Sciatic nerve (tissue), 2 donors: ENCODE measurements at regions of chr4 and their contacts with region 1.

Region 1: DNA sequence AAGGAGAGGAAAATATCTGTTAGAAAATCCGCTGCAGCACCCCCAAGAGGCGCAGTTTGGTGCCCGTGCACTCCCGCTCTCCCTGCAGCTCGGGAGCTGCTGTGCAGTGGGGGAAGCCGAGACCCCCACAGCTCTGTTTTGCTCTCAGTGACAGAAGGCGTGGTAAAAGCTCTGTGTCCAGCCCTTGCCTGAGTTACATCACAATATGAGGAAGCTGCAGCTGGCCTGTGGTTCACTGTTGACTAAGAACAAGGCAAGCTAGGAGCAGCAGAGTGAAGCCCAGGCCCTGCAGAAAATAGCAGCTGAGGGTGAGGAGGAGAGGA is 88.5 kb upstream of the ADRA2C start:
- DNase-seq: no peak
- ATAC-seq: no peak

Region 2: GRCh38 chr4:3753726-3754412 is 76.2 kb after region 1 on chr4:
- intact Hi-C with region 1: loop called (anchors 2 kb)
- DNase-seq: no peak
- ATAC-seq: no peak